ENCODE measurements at regions of chr5 and their contacts with region 1.

Region 1: GRCh38 chr5:146218168-146218567 is 14.8 kb downstream of the RBM27 start:
- DNase-seq: no peak
- H3K4me3 ChIP-seq: no peak overlapping the region
- H3K27ac ChIP-seq: no peak overlapping the region
- H3K4me1 ChIP-seq: peaks cover 3 to 5% of the 10 kb centered on the region in 2 donors
- H3K27me3 ChIP-seq: no peaks in the 10 kb centered on the region
- CTCF ChIP-seq: no peak
- POLR2A ChIP-seq: no peak

Region 2: GRCh38 chr5:145887976-145888574 is 330.1 kb before region 1 on chr5:
- intact Hi-C with region 1: no loop called
- DNase-seq: peak; percentile 43
- H3K4me3 ChIP-seq: no peak overlapping the region
- H3K27ac ChIP-seq: no peak overlapping the region
- H3K4me1 ChIP-seq: no peaks in the 10 kb centered on the region
- H3K27me3 ChIP-seq: no peaks in the 10 kb centered on the region
- CTCF ChIP-seq: peak; percentile 23 to 71 (median 51)
- POLR2A ChIP-seq: no peak

Region 3: DNA sequence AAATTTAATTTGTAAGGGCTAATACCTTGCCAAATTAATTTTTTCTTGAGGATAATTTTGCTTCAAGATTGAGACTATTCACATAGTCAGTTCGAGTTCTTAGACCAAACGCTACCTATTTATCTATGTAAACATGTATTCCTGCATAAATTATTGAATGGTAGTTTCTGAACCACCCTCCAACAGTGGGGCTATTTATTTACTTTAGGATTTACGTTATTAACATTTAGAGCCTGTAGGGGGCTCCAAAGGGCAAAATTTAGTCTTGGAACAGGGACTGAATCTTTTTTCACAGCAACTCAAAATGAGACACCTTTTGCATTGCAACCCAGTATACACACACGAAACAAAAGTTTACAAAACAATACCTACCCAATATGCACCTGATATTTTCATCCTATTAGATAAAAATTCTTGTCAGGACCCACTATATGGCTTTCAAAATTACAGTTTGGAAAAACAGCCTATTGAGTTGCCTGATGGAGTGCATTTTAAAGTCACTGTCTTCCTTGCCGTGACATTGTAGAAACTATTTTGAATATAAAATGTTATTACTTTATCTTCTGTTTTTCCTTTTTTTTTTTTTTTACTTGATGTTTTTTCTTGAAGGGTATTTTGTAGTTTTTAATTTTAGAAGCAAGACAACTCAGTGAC is 73.4 kb after region 1 on chr5:
- intact Hi-C with region 1: no loop called
- DNase-seq: no peak
- H3K4me3 ChIP-seq: no peak overlapping the region
- H3K27ac ChIP-seq: no peak overlapping the region
- H3K4me1 ChIP-seq: no peaks in the 10 kb centered on the region
- H3K27me3 ChIP-seq: no peaks in the 10 kb centered on the region
- CTCF ChIP-seq: peak in 4 of 6 experiments; percentile 20 to 58 (median 48)
- POLR2A ChIP-seq: no peak

Region 4: GRCh38 chr5:146507428-146507827 is 289.3 kb after region 1 on chr5:
- intact Hi-C with region 1: loop called (anchors 5 kb)
- DNase-seq: no peak
- H3K4me3 ChIP-seq: no peak overlapping the region
- H3K27ac ChIP-seq: no peak overlapping the region
- H3K4me1 ChIP-seq: no peaks in the 10 kb centered on the region
- H3K27me3 ChIP-seq: no peaks in the 10 kb centered on the region
- CTCF ChIP-seq: no peak
- POLR2A ChIP-seq: no peak